Calu3 (cell line): ENCODE measurements at regions of chr12 and their contacts with region 1.

Region 1: GRCh38 chr12:92762773-92763172 is 60.0 kb downstream of the PLEKHG7 start:
- DNase-seq: no peak
- H3K4me3 Mint-ChIP-seq: no peak overlapping the region
- H3K27ac Mint-ChIP-seq: no peak overlapping the region
- H3K4me1 Mint-ChIP-seq: no peaks in the 10 kb centered on the region
- H3K27me3 Mint-ChIP-seq: no peaks in the 10 kb centered on the region
- CTCF ChIP-seq: no peak

Region 2: GRCh38 chr12:93592641-93593406 is 830.1 kb after region 1 on chr12:
- CTCF ChIA-PET with region 1: interaction called, 12 read pairs
- intact Hi-C with region 1: no loop called
- DNase-seq: no peak
- H3K4me3 Mint-ChIP-seq: no peak overlapping the region
- H3K27ac Mint-ChIP-seq: no peak overlapping the region
- H3K4me1 Mint-ChIP-seq: no peaks in the 10 kb centered on the region
- H3K27me3 Mint-ChIP-seq: no peaks in the 10 kb centered on the region
- CTCF ChIP-seq: no peak